ENCODE measurements at regions of chr3 and their contacts with region 1.

Region 1: GRCh38 chr3:170792471-170792870 is 77.5 kb downstream of the RPL22L1 start:
- DNase-seq: no peak
- ATAC-seq: no peak
- H3K4me3 Mint-ChIP-seq: no peak overlapping the region
- H3K27ac Mint-ChIP-seq: no peak overlapping the region
- H3K4me1 Mint-ChIP-seq: no peaks in the 10 kb centered on the region
- H3K27me3 Mint-ChIP-seq: peaks cover 5% of the 10 kb centered on the region
- CTCF ChIP-seq: no peak

Region 2: GRCh38 chr3:170835336-170835735 is 42.9 kb after region 1 on chr3:
- CTCF ChIA-PET with region 1: no interaction called
- POLR2A ChIA-PET with region 1: no interaction called
- intact Hi-C with region 1: loop called (anchors 1 kb)
- DNase-seq: no peak
- ATAC-seq: no peak
- H3K4me3 Mint-ChIP-seq: no peak overlapping the region
- H3K27ac Mint-ChIP-seq: no peak overlapping the region
- H3K4me1 Mint-ChIP-seq: no peaks in the 10 kb centered on the region
- H3K27me3 Mint-ChIP-seq: peaks cover 33% of the 10 kb centered on the region
- CTCF ChIP-seq: no peak